ENCODE measurements at regions of chr14 and their contacts with region 1.

Region 1: DNA sequence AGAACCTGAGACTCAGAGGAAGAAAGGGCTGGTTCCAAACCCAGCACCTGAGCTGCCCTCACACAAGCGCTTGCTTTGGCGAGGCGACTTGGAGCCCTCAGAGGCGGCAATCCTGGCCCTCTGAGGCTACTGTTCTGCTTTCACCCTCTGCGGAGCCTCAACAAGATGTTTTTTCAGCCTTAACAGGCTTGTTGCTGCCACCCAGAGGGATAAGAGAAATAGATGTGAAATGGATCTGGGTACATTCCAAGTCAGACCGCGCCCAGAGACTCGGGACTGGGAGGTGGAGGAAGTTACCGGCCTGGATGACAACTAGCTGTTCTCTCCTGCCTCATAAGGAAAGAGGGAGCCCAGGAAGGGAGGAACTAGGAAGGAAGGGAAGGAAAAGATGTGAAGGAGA is 89.6 kb downstream of the TTC7B start:
- DNase-seq: no peak
- H3K4me3 ChIP-seq: no peak overlapping the region
- H3K27ac ChIP-seq: peak overlapping the region; percentile 11
- H3K27me3 ChIP-seq: no peaks in the 10 kb centered on the region
- CTCF ChIP-seq: peak; percentile 24; the same call in 1 of the 2 replicates

Region 2: GRCh38 chr14:90140298-90140955 is 586.2 kb before region 1 on chr14:
- CTCF ChIA-PET with region 1: interaction called, 10 read pairs
- POLR2A ChIA-PET with region 1: no interaction called
- DNase-seq: no peak
- H3K4me3 ChIP-seq: no peak overlapping the region
- H3K27ac ChIP-seq: no peak overlapping the region
- H3K27me3 ChIP-seq: peaks cover 5% of the 10 kb centered on the region
- CTCF ChIP-seq: no peak

Region 3: GRCh38 chr14:90677484-90678050 is 49.1 kb before region 1 on chr14:
- CTCF ChIA-PET with region 1: no interaction called
- POLR2A ChIA-PET with region 1: no interaction called
- DNase-seq: no peak
- H3K4me3 ChIP-seq: no peak overlapping the region
- H3K27ac ChIP-seq: peak overlapping the region; percentile 63
- H3K27me3 ChIP-seq: no peaks in the 10 kb centered on the region
- CTCF ChIP-seq: no peak

Region 4: DNA sequence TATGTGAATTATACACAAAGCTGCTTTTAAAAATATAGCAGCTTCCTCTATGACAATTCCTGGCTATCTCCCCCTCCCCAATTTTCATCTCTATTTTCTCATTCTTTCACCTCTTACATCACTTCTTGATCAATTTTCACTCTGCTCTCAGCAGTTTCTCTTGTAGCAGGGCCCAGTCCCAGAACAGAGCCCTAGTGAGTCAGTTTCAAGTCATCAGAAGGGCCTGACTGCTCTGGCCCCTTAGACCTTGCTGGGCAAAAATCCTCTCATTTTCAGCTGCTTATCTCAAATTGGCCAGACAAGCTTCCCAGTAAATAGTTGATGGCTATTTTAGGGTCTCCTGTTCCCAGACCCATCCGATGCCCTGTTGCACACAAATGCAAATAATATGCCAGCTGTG is 11.8 kb before region 1 on chr14:
- CTCF ChIA-PET with region 1: no interaction called
- POLR2A ChIA-PET with region 1: no interaction called
- DNase-seq: no peak
- H3K4me3 ChIP-seq: no peak overlapping the region
- H3K27ac ChIP-seq: no peak overlapping the region
- H3K27me3 ChIP-seq: no peaks in the 10 kb centered on the region
- CTCF ChIP-seq: no peak

Region 5: GRCh38 chr14:91624757-91625156 is 898.1 kb after region 1 on chr14:
- CTCF ChIA-PET with region 1: no interaction called
- POLR2A ChIA-PET with region 1: no interaction called
- DNase-seq: no peak
- H3K4me3 ChIP-seq: no peak overlapping the region
- H3K27ac ChIP-seq: no peak overlapping the region
- H3K27me3 ChIP-seq: no peaks in the 10 kb centered on the region
- CTCF ChIP-seq: no peak

Measured in AG04450 (cell line).